GM10248 (cell line): ENCODE measurements at regions of chr10 and their contacts with region 1.

Region 1: GRCh38 chr10:48765039-48765438 is 80.4 kb downstream of the WDFY4 start:
- DNase-seq: no peak
- CTCF ChIP-seq: peak; percentile 32

Region 2: DNA sequence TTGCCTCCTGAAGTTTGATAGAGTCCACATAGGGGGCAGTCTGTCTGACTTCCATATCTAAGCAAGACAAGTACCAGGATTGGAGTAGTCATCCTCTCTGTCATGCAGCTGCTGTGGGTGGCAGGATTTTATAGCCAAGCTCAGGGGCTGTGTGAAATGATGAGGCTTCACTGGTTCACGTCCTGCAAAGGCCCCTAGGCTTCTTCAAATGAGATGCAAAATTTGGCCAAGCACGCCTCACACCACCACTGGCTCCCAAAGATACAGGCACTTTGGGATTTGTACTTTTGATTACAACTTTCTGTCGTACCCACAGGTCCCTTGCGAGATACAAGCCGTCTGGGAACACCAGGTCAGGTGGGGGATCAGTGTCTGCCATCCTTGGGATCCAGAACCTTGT is 13.3 kb before region 1 on chr10:
- CTCF ChIA-PET with region 1: interaction called, 16 read pairs
- POLR2A ChIA-PET with region 1: interaction called, 3 read pairs
- DNase-seq: no peak
- CTCF ChIP-seq: no peak

Region 3: GRCh38 chr10:48792687-48793096 is 27.7 kb after region 1 on chr10:
- CTCF ChIA-PET with region 1: interaction called, 12 read pairs
- POLR2A ChIA-PET with region 1: no interaction called
- DNase-seq: no peak
- CTCF ChIP-seq: no peak